HCT116 (cell line): ENCODE measurements at regions of chr17 and their contacts with region 1.

Region 1: DNA sequence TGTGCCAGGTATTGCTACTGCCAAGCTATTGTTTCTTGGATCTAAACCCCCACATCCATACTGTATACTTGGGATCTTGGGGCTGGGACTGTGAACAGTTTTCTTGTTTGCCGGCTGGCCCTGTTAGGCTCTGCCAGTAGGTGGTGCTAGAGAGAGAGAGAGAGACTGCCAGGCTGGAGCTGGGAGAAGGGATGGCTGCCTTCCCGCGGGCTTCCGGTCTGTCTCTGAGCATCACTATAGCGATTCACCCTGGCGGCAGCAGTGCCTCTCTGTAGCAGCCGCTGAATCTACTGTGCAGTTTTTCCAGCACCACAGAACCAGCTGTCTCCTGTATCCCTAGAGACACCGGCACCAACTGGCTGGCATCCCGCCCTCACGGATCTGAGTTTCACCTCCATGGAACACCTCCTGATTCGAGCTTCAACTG is 201.2 kb downstream of the UTP18 start:
- DNase-seq: peak; percentile 78
- ATAC-seq: peak; percentile 97
- H3K4me3 ChIP-seq: no peak overlapping the region
- H3K27ac ChIP-seq: no peak overlapping the region
- H3K4me1 ChIP-seq: peaks cover 0 to 4% of the 10 kb centered on the region in 2 experiments; a peak in 1 of 4 replicates
- H3K27me3 ChIP-seq: peaks cover 16% of the 10 kb centered on the region
- CTCF ChIP-seq: peak; percentile 63 to 100 (median 100); a peak in 5 of 6 replicates
- POLR2A ChIP-seq: no peak
- RAD21 ChIP-seq: peak; percentile 72

Region 2: GRCh38 chr17:51035431-51035830 is 426.2 kb before region 1 on chr17:
- CTCF ChIA-PET with region 1: no interaction called
- POLR2A ChIA-PET with region 1: no interaction called
- RAD21 ChIA-PET with region 1: no interaction called
- intact Hi-C with region 1: no loop called
- DNase-seq: no peak
- ATAC-seq: no peak
- H3K4me3 ChIP-seq: no peak overlapping the region
- H3K27ac ChIP-seq: no peak overlapping the region
- H3K4me1 ChIP-seq: no peaks in the 10 kb centered on the region
- H3K27me3 ChIP-seq: no peaks in the 10 kb centered on the region
- CTCF ChIP-seq: no peak
- POLR2A ChIP-seq: no peak
- RAD21 ChIP-seq: no peak

Region 3: DNA sequence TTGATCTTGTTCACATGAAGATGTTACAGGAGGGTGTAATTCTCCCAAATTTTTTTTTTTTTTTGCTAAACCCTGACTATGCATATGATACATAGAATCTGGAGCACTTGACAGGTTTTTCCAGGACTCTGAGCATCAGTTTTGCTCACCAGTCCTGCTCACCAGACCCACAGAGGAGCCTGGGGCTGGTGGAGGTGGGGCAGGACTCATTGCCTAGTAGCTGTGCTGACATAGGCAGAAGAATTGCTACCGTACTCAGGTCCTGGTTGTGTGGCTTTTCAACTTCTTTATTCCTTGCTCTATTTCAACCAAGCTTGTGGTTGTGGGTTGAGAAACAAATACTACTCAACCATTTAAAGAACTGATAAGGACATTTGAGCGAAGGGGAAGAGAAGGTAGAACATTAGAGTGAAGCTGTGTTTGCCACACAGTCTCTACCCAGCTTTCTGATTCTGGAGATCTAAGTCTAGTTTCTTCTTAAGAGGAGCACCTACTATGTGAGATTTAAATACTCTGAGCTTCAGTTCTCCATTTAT is 11.1 kb after region 1 on chr17:
- CTCF ChIA-PET with region 1: interaction called, 31 read pairs
- POLR2A ChIA-PET with region 1: no interaction called
- RAD21 ChIA-PET with region 1: no interaction called
- intact Hi-C with region 1: no loop called
- DNase-seq: no peak
- ATAC-seq: no peak
- H3K4me3 ChIP-seq: no peak overlapping the region
- H3K27ac ChIP-seq: no peak overlapping the region
- H3K4me1 ChIP-seq: no peaks in the 10 kb centered on the region
- H3K27me3 ChIP-seq: peaks cover 77% of the 10 kb centered on the region
- CTCF ChIP-seq: no peak
- POLR2A ChIP-seq: no peak
- RAD21 ChIP-seq: no peak